ENCODE measurements at regions of chr1 and their contacts with region 1.

Region 1: DNA sequence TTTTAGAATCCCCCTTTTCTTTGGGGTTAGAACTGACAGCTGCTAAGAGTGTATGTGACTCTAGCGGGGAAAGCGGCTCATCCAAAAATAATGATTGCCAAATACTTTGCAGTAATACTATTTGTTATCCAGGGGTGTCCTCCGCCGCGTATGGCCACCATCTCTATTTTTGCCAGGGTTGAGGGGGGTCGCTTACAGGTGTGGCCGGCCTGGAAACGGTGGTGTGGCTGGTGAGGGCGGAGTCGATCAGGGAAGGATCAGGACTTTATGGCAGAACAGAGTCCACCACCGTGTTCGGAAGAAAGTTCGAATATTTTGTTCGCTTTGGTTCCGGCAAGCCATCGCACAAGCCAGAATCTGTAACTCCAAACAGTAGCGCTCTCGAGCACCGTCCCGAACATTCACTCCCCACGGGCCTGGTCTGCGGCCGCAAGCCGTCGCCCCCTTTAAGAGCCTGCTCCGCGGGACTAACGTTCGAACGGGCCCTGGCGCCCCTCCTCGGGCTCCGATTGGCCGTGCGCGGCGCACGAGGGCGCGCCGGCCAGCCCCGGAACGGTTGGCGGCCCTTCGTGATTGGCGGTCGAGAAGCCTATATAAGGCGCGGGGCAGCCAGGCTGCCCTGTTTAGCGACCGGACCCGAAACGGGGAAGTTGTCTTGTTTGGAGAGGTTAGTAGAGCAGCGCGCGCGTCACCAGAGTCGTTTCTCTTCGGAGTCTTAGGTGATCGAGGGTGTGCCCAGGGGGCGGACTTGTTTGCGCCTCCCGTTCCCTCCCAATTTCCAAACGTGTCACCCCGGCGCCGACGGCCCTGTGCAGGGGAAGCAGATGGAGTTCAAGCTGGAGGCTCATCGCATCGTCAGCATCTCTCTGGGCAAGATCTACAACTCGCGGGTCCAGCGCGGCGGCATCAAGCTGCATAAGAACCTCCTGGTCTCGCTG is at the start of gene IER5:
- DNase-seq: peak; percentile 98
- H3K4me3 Mint-ChIP-seq: peak within 1 kb of the TSS; percentile 97
- H3K27ac Mint-ChIP-seq: peak within 1 kb of the TSS; percentile 96
- H3K4me1 Mint-ChIP-seq: peaks cover 39% of the 10 kb centered on the region
- H3K27me3 Mint-ChIP-seq: peaks cover 2% of the 10 kb centered on the region
- total RNA-seq, gene IER5: 27.9 to 28.9 TPM

Region 2: DNA sequence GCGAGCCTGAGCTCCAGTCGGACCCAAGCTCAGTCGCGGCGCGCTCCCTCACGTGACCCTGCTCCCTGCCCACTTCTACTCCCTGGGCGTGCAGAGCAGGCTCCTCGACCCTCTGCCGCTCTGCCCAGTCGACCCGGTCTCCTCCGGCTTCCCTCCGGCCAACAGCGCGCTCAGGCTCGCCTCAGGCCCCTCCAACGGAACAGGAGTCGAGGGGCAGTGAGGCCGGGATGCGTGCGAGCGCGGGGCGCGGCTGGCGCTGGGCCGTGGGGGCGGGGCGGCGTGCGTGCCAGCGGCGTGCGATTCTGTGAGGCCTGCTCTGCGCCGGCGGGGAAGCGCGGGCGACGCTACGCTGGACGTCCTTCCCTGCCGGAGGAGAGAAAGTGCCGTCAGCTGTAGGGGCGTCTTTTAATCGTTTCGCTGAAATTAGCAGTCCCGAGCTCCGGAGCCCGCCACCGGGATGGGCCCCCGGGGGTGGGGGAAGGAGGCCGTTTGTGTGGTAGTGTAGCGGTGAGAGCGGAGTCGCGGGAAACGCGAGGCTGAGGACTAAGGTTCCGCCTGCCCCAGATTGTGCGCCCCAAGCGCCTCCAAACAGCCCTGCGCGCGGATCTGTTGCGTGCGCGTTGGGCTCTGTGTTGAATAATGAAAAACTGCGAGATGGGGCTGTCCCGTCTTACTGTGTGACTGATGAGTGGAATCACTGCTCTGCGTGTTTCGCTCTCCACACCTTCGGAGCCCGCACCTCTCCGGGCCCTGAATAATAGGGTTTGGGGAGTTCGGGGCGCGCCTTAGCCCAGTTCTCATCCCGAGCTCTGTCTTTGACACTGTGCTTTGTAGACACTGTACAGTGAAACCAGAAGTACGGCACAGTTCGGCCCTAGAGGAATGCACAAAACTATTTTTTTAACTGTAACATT is 585.7 kb before region 1 on chr1 and contains the start of gene ACBD6:
- CTCF ChIA-PET with region 1: no interaction called
- POLR2A ChIA-PET with region 1: interaction called, 3 read pairs
- intact Hi-C with region 1: loop called (anchors 5 kb)
- DNase-seq: peak; percentile 93
- H3K4me3 Mint-ChIP-seq: peak within 1 kb of the TSS; percentile 96
- H3K27ac Mint-ChIP-seq: peak within 1 kb of the TSS; percentile 94
- H3K4me1 Mint-ChIP-seq: peaks cover 33% of the 10 kb centered on the region
- H3K27me3 Mint-ChIP-seq: no peaks in the 10 kb centered on the region
- total RNA-seq, gene ACBD6: 36.7 to 40.8 TPM

Region 3: DNA sequence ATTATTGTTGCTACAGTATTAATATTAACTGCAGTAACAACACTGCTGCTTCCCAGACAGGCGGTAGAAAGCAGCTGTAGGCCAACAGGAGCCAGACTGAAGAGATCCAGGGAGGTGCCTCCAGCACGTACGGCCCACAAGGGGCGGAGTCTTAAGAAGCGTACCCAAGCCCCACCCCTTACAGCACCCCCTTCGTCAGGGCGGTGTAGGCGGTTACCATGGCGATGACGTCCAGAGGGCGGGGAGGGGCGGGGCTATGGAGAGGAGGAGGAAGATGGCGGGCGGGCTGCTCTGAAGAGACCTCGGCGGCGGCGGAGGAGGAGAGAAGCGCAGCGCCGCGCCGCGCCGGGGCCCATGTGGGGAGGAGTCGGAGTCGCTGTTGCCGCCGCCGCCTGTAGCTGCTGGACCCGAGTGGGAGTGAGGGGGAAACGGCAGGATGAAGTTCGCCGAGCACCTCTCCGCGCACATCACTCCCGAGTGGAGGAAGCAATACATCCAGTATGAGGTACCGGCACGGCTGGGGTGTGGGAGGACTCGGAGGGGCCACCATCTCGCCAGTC is 456.5 kb before region 1 on chr1 and contains the start of gene XPR1:
- CTCF ChIA-PET with region 1: no interaction called
- POLR2A ChIA-PET with region 1: no interaction called
- intact Hi-C with region 1: loop called (anchors 2 kb)
- DNase-seq: peak; percentile 99
- H3K4me3 Mint-ChIP-seq: no peak within 1 kb of the TSS
- H3K27ac Mint-ChIP-seq: peak within 1 kb of the TSS; percentile 82
- H3K4me1 Mint-ChIP-seq: peaks cover 5% of the 10 kb centered on the region
- H3K27me3 Mint-ChIP-seq: no peaks in the 10 kb centered on the region
- total RNA-seq, gene XPR1: 17.9 to 18.4 TPM

Region 4: DNA sequence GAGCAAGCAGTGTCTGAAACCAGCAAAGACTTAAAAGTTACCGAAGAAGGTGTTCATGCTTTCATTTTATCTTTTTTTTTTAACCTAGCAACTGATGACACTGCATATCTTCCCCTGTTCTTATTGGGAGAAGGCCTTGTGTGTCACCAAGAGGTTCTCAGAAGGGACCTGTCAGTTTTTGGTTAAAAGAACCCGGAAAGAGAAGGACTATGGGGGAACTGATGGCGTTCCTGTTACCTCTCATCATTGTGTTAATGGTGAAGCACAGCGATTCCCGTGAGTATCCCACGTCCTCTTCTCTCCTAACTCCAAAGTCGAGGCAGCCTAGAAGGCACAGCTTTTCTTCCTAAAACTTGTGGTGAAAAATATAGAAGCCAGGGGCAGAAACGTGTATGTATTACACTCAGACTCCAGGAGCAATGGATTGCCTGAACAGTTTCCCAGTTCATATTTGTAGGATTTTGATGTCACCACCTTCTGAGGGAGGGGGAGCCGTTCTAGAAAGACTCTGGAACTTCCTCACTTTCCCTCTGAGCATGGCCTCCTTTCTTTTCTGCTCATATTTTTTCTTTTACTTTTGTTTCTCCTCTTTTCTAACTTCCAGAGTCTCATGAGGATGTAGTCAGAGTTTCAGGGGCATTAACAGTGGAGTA is 54.4 kb before region 1 on chr1 and contains the start of gene MR1:
- CTCF ChIA-PET with region 1: interaction called, 34 read pairs
- POLR2A ChIA-PET with region 1: interaction called, 29 read pairs
- intact Hi-C with region 1: loop called (anchors 1 kb)
- DNase-seq: peak; percentile 37
- H3K4me3 Mint-ChIP-seq: peak within 1 kb of the TSS; percentile 93
- H3K27ac Mint-ChIP-seq: peak within 1 kb of the TSS; percentile 97
- H3K4me1 Mint-ChIP-seq: peaks cover 52% of the 10 kb centered on the region
- H3K27me3 Mint-ChIP-seq: no peaks in the 10 kb centered on the region
- total RNA-seq, gene MR1: 19.5 to 21.2 TPM

Region 5: DNA sequence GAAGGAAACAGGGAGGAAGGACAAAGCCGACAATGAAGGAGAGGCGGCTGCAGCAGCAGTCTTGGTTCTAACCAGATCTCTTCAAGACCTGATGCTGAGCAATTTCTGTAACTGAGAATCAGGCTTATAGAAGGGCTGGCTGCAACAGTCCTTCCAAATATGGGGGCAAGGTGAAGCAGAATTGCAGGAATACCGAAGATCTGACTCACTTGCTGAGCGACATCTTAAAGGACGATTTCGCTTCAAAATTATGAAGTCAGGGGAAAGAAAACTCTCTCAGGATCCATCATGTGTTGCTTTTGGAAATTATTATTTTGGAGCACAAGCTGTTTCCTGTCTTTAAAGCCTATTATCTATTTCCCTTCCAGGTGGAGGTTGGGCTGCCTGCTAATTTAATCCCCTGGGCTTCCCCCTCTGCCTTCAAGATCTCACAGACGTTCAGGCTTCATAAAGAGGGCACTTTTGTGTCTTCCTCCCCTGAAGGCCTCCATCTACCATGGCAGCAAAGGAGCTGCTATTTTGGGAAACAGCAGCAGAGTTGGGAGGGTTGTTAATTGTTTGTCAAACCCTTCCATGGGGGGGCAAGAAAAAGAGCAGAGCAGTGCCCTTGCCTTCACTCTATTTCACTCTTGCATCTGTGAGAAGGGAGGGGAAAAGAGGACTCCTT is 10.6 kb before region 1 on chr1:
- CTCF ChIA-PET with region 1: interaction called, 3 read pairs
- POLR2A ChIA-PET with region 1: interaction called, 20 read pairs
- intact Hi-C with region 1: no loop called
- DNase-seq: no peak
- H3K4me3 Mint-ChIP-seq: no peak overlapping the region
- H3K27ac Mint-ChIP-seq: no peak overlapping the region
- H3K4me1 Mint-ChIP-seq: peaks cover 18% of the 10 kb centered on the region
- H3K27me3 Mint-ChIP-seq: peaks cover 19% of the 10 kb centered on the region

Region 6: DNA sequence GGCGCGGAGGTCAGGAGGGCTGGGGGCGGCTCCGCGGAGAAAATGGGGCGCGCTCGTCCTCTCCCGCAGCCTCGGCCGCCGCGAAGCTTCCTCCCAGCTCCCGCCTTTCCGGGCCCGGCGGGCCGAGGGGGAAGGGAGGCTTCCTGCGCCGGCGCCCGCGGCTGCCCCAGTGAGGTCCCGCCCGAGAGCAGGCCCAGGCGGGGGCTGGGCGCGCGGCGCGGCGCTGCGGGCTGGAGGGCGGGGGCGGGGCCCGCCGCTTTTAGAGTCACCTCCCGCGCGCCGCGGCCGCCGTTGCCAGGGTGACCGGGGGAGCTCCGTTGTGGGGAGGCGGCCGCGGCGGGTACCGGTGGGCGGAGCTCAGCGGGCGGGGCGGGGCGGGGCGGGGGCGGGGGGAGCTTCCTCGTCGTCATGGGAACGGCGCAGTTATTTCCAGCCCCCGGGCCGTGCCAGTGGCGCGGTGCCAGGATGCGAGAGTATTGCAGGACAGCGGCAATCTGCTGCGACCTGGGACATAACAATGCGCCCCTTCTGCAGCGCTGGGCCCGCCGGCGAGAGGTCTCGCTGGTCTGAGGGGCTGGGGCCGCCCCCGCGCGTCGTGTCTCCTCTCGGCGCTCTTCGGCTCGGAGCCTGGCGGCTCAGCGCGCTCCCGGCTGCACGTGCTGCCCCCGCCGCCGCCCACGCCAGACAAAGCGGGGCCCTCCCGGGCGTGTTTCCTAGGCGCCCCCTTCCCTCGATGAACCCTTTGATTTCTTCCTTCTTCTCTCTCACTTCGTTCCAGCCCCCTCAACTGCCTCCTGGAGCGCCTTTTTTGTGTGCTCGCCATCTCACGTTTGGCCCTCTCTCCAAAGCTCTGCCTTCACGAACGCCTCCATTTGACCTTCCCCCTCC is 17.0 kb after region 1 on chr1:
- CTCF ChIA-PET with region 1: interaction called, 24 read pairs
- POLR2A ChIA-PET with region 1: interaction called, 168 read pairs
- intact Hi-C with region 1: loop called (anchors 1 kb)
- DNase-seq: peak; percentile 93
- H3K4me3 Mint-ChIP-seq: peak overlapping the region; percentile 72
- H3K27ac Mint-ChIP-seq: peak overlapping the region; percentile 1
- H3K4me1 Mint-ChIP-seq: peaks cover 51% of the 10 kb centered on the region
- H3K27me3 Mint-ChIP-seq: peaks cover 19% of the 10 kb centered on the region

Region 7: GRCh38 chr1:181166377-181167196 is 78.2 kb after region 1 on chr1:
- CTCF ChIA-PET with region 1: interaction called, 7 read pairs
- POLR2A ChIA-PET with region 1: interaction called, 3 read pairs
- intact Hi-C with region 1: loop called (anchors 1 kb)
- DNase-seq: peak; percentile 80
- H3K4me3 Mint-ChIP-seq: no peak overlapping the region
- H3K27ac Mint-ChIP-seq: no peak overlapping the region
- H3K4me1 Mint-ChIP-seq: peaks cover 3% of the 10 kb centered on the region
- H3K27me3 Mint-ChIP-seq: no peaks in the 10 kb centered on the region